CD8-positive, alpha-beta T cell (primary cell): ENCODE measurements at regions of chr16 and their contacts with region 1.

Region 1: DNA sequence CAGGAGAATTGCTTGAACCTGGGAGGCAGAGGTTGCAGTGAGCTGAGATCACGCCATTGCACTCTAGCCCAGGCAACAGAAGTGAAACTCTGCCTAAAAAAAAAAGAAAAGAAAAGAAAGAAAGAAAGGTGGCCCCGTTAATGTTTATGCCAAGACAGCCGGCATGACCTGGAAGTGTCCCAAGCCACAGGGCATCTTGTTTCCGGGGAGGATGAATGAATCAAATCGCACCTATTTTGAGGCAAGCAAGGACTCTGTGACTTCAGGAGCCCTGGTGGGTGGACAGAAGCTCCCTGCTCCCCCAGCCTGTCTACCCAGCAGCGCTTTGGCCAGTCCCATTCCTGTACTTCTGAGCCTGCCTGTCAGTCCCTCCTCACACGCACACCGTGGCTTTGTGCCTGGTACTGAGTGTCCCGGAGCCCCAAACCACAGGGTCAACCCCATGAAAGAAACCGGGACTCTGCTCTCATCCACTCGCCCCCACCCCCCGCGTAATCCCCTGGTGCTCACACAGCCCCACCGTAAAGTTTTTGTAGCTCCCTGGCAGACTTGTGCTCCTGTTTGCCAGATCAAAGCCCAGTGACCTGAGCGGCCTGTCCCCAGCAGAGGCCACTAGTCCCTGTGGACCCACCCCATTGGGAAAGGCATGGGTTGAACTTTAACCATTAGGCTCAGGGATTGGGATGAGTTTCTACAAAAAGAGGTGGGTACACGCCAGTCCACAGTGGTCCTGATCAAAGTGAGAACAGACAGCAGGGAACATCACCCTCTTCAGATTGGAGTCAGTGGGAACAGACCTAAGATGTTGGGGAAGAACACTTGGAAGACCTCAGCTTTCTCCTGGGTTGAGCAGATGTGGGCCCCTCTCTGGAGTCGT is 19.3 kb downstream of the CD2BP2 start:
- DNase-seq: peak in 4 of 9 experiments; percentile 32 to 72 (median 60)
- ATAC-seq: peak; percentile 2
- H3K4me3 ChIP-seq: peak overlapping the region; percentile 38 to 51
- H3K4me3 Mint-ChIP-seq: peak overlapping the region; percentile 86
- H3K27ac ChIP-seq: peak overlapping the region; percentile 50 to 52
- H3K27ac Mint-ChIP-seq: peak overlapping the region; percentile 86
- H3K4me1 ChIP-seq: peaks cover 10% of the 10 kb centered on the region
- H3K4me1 Mint-ChIP-seq: peaks cover 32% of the 10 kb centered on the region
- H3K27me3 ChIP-seq: no peaks in the 10 kb centered on the region
- H3K27me3 Mint-ChIP-seq: no peaks in the 10 kb centered on the region
- CTCF ChIP-seq: no peak

Region 2: GRCh38 chr16:30355144-30355894 is 19.5 kb after region 1 on chr16 and contains the start of gene CD2BP2:
- CTCF ChIA-PET with region 1: no interaction called
- POLR2A ChIA-PET with region 1: interaction called, 4 read pairs
- intact Hi-C with region 1: loop called in 1 of 2 experiments (anchors 1 kb)
- DNase-seq: peak; percentile 72 to 97 (median 86)
- ATAC-seq: peak; percentile 88
- H3K4me3 ChIP-seq: peak within 1 kb of the TSS; percentile 70 to 98
- H3K4me3 Mint-ChIP-seq: peak within 1 kb of the TSS; percentile 94
- H3K27ac ChIP-seq: peak within 1 kb of the TSS; percentile 63 to 98
- H3K27ac Mint-ChIP-seq: peak within 1 kb of the TSS; percentile 98
- H3K4me1 ChIP-seq: peaks cover 32% of the 10 kb centered on the region
- H3K4me1 Mint-ChIP-seq: peaks cover 27% of the 10 kb centered on the region
- H3K27me3 ChIP-seq: no peaks in the 10 kb centered on the region
- H3K27me3 Mint-ChIP-seq: no peaks in the 10 kb centered on the region
- CTCF ChIP-seq: no peak
- total RNA-seq, gene CD2BP2: 35.4 to 35.9 TPM

Region 3: GRCh38 chr16:30858829-30859423 is 523.1 kb after region 1 on chr16:
- CTCF ChIA-PET with region 1: no interaction called
- POLR2A ChIA-PET with region 1: no interaction called
- intact Hi-C with region 1: no loop called
- DNase-seq: no peak
- ATAC-seq: no peak
- H3K4me3 ChIP-seq: no peak overlapping the region
- H3K4me3 Mint-ChIP-seq: no peak overlapping the region
- H3K27ac ChIP-seq: no peak overlapping the region
- H3K27ac Mint-ChIP-seq: no peak overlapping the region
- H3K4me1 ChIP-seq: no peaks in the 10 kb centered on the region
- H3K4me1 Mint-ChIP-seq: no peaks in the 10 kb centered on the region
- H3K27me3 ChIP-seq: no peaks in the 10 kb centered on the region
- H3K27me3 Mint-ChIP-seq: no peaks in the 10 kb centered on the region
- CTCF ChIP-seq: no peak